ENCODE measurements at regions of chr18 and their contacts with region 1.

Region 1: GRCh38 chr18:22872900-22873551 is 60.1 kb upstream of the RBBP8 start:
- DNase-seq: no peak
- H3K4me3 ChIP-seq: no peak overlapping the region
- H3K27ac ChIP-seq: no peak overlapping the region
- H3K4me1 ChIP-seq: peaks cover 19% of the 10 kb centered on the region
- H3K27me3 ChIP-seq: no peaks in the 10 kb centered on the region
- CTCF ChIP-seq: no peak

Region 2: GRCh38 chr18:22831441-22831904 is 41.6 kb before region 1 on chr18:
- CTCF ChIA-PET with region 1: interaction called, 5 read pairs
- dilution Hi-C with region 1: no loop called
- in situ Hi-C with region 1: no loop called
- intact Hi-C with region 1: loop called (anchors 2 kb)
- DNase-seq: peak; percentile 87
- H3K4me3 ChIP-seq: no peak overlapping the region
- H3K27ac ChIP-seq: peak overlapping the region; percentile 68
- H3K4me1 ChIP-seq: peaks cover 38% of the 10 kb centered on the region
- H3K27me3 ChIP-seq: no peaks in the 10 kb centered on the region
- CTCF ChIP-seq: no peak

Region 3: DNA sequence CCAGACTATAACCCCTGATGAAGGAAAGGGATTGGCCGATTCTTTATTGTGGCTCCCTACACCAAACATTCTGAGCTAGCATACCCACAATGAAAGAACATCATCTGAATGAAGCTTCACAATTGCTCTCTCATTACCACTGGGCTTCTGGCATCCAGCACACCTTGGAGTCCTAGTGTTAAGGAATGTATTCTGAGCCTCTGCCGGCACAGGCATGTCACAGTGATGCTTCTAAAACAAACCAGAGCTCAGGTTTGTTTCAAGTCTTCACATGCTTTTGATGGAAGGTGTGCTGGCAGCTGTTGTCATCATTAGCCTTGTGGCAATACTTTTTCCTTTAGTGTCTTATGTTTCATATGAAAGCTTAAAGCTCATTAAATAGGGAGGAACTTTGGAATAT is 16.2 kb before region 1 on chr18:
- CTCF ChIA-PET with region 1: interaction called, 4 read pairs
- dilution Hi-C with region 1: no loop called
- in situ Hi-C with region 1: no loop called
- intact Hi-C with region 1: loop called (anchors 1 kb)
- DNase-seq: peak; percentile 96
- H3K4me3 ChIP-seq: no peak overlapping the region
- H3K27ac ChIP-seq: peak overlapping the region; percentile 96
- H3K4me1 ChIP-seq: peaks cover 26% of the 10 kb centered on the region
- H3K27me3 ChIP-seq: no peaks in the 10 kb centered on the region
- CTCF ChIP-seq: no peak

Measured in mammary epithelial cell (primary cell).